Sigmoid colon (tissue), 7 donors: ENCODE measurements at regions of chr20 and their contacts with region 1.

Region 1: GRCh38 chr20:39264506-39265172 is 302.5 kb downstream of the DHX35 start:
- DNase-seq: peak; percentile 82
- H3K4me3 ChIP-seq: no peak overlapping the region
- H3K27ac ChIP-seq: no peak overlapping the region
- H3K4me1 ChIP-seq: peaks cover 0 to 9% (median 4%) of the 10 kb centered on the region in 4 donors
- H3K27me3 ChIP-seq: no peaks in the 10 kb centered on the region
- CTCF ChIP-seq: peak; percentile 32 to 82 (median 62)
- EP300 ChIP-seq: no peak
- POLR2A ChIP-seq: no peak

Region 2: DNA sequence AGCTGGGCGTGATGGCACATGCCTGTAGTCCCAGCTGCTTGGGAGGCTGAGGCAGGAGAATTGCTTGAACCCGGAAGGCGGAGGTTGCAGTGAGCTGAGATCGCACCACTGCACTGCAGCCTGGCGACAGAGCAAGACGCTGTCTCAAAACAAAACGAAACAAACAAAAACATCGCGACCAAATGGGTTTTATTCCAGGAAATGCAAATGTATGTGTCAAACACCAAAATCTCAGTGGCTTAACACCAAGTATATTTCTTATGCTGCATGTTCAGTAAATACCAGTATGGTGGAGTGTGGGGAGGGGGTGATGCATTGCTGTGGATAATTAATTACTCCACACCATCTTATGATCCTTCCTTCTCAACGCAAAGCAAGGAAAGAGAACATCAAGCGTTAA is 488.3 kb before region 1 on chr20:
- intact Hi-C with region 1: no loop called
- DNase-seq: no peak
- H3K4me3 ChIP-seq: no peak overlapping the region
- H3K27ac ChIP-seq: no peak overlapping the region
- H3K4me1 ChIP-seq: no peaks in the 10 kb centered on the region
- H3K27me3 ChIP-seq: no peaks in the 10 kb centered on the region
- CTCF ChIP-seq: no peak
- EP300 ChIP-seq: no peak
- POLR2A ChIP-seq: no peak

Region 3: DNA sequence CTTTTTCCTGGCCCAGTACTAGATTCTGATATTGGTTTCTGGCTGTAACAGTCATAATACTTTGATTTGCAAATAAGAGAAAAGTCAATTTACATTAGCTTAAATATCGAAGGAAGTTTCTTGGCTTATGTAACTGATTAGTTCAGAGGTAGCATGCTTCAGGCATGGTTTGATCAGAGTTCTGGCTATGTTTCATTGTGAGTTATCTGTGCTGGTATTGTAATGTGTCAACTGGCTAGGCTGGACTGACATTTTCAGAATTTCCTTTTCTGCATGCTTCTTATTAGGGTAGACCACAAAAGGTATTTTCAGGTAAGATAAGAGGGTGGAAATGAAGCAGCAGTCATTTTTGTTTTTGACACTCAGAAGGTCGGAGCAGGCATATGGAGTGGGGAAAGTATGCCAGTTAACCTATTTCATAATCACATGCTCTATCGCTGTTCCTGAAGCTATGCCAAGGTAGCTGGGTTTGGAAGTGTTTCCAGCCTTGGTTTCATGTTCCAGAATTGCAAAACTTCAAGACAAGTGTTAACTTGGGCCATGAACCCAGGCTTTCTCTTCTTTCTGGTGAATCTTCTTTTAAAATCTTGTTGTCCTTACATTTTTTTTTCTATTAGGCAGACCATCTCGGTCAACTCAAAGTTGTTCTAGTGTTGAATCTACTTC is 57.6 kb before region 1 on chr20:
- intact Hi-C with region 1: no loop called
- DNase-seq: no peak
- H3K4me3 ChIP-seq: no peak overlapping the region
- H3K27ac ChIP-seq: no peak overlapping the region
- H3K4me1 ChIP-seq: no peaks in the 10 kb centered on the region
- H3K27me3 ChIP-seq: no peaks in the 10 kb centered on the region
- CTCF ChIP-seq: no peak
- EP300 ChIP-seq: no peak
- POLR2A ChIP-seq: no peak

Region 4: DNA sequence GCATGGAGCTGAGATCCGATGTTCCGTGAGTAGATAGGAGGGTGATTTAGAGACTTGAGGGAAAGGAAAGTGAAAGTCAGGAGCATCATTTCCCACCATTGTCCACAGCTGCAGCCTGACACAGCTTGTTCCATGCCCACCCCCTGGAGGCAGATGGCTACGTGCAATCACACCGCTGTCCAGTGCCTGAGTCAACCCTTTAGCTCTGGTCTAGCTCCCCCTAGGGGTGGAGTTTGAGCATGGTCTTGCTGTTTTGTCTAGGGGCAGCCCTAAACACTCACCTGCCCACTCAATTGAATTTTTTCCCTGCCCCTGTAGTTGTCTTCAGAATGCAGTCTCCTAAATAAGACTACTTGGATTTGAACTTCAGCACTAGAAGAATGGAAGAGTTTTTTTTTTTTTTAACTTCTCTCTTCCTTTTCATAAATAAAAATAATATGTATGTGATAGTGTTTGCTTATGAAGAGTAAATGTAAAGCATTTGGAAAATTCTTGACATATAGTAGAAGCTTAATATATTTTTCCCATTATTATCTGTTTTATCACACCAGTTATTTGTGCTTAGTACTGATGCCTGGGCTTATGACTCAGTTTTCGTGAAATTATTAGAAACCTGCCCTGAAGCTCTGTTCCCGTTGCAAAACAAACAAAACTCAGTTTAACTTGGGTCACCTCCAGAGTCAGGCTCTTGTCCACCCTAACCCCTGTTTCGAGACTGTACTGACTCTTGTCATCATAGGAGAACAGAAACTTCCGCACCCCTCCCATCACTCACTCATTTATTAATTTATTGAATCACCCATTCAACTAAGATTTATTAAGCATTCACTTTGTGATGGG is 609.6 kb after region 1 on chr20:
- intact Hi-C with region 1: loop called (anchors 5 kb)
- DNase-seq: peak; percentile 82
- H3K4me3 ChIP-seq: no peak overlapping the region
- H3K27ac ChIP-seq: no peak overlapping the region
- H3K4me1 ChIP-seq: peaks cover 0 to 25% (median 18%) of the 10 kb centered on the region in 4 donors
- H3K27me3 ChIP-seq: no peaks in the 10 kb centered on the region
- CTCF ChIP-seq: peak; percentile 17 to 63 (median 46)
- EP300 ChIP-seq: no peak
- POLR2A ChIP-seq: no peak